CD8-positive, alpha-beta T cell (primary cell): ENCODE measurements at regions of chr11 and their contacts with region 1.

Region 1: DNA sequence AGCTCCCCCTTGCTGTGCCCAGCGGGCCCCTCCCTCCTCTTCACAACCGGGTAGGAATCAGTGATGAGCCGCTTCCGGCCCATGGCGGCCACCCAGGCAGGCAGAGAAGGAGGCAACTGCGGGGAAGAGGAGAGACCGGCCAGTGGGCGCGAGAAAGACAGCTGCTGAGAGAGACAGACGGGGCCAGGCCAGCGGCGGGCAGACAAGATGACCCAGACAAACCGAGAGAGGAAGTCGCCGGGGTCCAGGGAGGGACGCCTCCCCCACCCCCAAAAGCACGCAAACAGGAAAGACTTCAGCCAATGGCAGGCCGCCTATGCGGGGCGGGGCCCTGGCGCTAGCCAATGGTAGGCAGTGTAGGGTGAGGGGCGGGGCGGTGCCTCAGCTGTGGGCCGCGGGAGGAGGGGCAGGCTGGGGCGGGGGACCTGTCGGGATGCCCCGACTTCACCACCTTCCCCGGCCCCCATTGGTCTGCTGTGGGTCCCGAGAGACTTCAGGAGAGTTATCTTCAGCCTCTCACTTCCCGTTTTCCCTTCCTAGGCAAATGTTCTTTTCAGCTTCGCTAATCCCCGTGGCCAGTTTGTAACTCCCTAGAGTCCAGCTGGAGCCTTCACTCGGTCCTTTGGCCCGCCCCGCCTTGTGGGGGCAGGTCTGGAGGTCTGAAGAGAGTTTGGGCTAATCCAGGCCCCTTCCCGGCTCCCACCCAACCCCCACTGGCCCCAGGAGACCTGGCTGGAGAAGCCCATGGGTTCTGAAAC is at the start of gene POLD4:
- DNase-seq: peak; percentile 87 to 98 (median 95)
- ATAC-seq: peak; percentile 87
- H3K4me3 ChIP-seq: peak within 1 kb of the TSS; percentile 83 to 88
- H3K4me3 Mint-ChIP-seq: peak within 1 kb of the TSS; percentile 99
- H3K27ac ChIP-seq: peak within 1 kb of the TSS; percentile 94 to 99
- H3K27ac Mint-ChIP-seq: peak within 1 kb of the TSS; percentile 100
- H3K4me1 ChIP-seq: peaks cover 45% of the 10 kb centered on the region
- H3K4me1 Mint-ChIP-seq: peaks cover 59% of the 10 kb centered on the region
- H3K27me3 ChIP-seq: no peaks in the 10 kb centered on the region
- H3K27me3 Mint-ChIP-seq: no peaks in the 10 kb centered on the region
- CTCF ChIP-seq: no peak
- total RNA-seq, gene POLD4: 32.4 to 41.9 TPM

Region 2: GRCh38 chr11:67265633-67266423 is 87.7 kb before region 1 on chr11:
- CTCF ChIA-PET with region 1: interaction called, 25 read pairs
- POLR2A ChIA-PET with region 1: interaction called, 3 read pairs
- intact Hi-C with region 1: no loop called
- DNase-seq: peak; percentile 56 to 91 (median 79)
- ATAC-seq: peak; percentile 35
- H3K4me3 ChIP-seq: no peak overlapping the region
- H3K4me3 Mint-ChIP-seq: peak overlapping the region; percentile 81
- H3K27ac ChIP-seq: peak overlapping the region in 1 of 2 experiments; percentile 51
- H3K27ac Mint-ChIP-seq: peak overlapping the region; percentile 86
- H3K4me1 ChIP-seq: peaks cover 61% of the 10 kb centered on the region
- H3K4me1 Mint-ChIP-seq: peaks cover 69% of the 10 kb centered on the region
- H3K27me3 ChIP-seq: peaks cover 0 to 4% of the 10 kb centered on the region in 2 experiments
- H3K27me3 Mint-ChIP-seq: no peaks in the 10 kb centered on the region
- CTCF ChIP-seq: peak; percentile 67

Region 3: GRCh38 chr11:67373925-67374618 is 20.6 kb after region 1 on chr11:
- CTCF ChIA-PET with region 1: interaction called, 1,319 read pairs
- POLR2A ChIA-PET with region 1: interaction called, 35 read pairs
- intact Hi-C with region 1: loop called (anchors 1 kb)
- DNase-seq: peak in 7 of 9 experiments; percentile 41 to 75 (median 59)
- ATAC-seq: peak; percentile 27
- H3K4me3 ChIP-seq: peak overlapping the region; percentile 43 to 61
- H3K4me3 Mint-ChIP-seq: peak overlapping the region; percentile 79
- H3K27ac ChIP-seq: peak overlapping the region in 1 of 2 experiments; percentile 21
- H3K27ac Mint-ChIP-seq: no peak overlapping the region
- H3K4me1 ChIP-seq: peaks cover 47% of the 10 kb centered on the region
- H3K4me1 Mint-ChIP-seq: peaks cover 48% of the 10 kb centered on the region
- H3K27me3 ChIP-seq: no peaks in the 10 kb centered on the region
- H3K27me3 Mint-ChIP-seq: peaks cover 8% of the 10 kb centered on the region
- CTCF ChIP-seq: peak; percentile 47

Region 4: GRCh38 chr11:67401495-67402191 is 48.1 kb after region 1 on chr11 and contains the start of gene PPP1CA:
- CTCF ChIA-PET with region 1: interaction called, 1,319 read pairs
- POLR2A ChIA-PET with region 1: interaction called, 18 read pairs
- intact Hi-C with region 1: loop called in 1 of 2 experiments (anchors 1 kb)
- DNase-seq: peak; percentile 86 to 98 (median 92)
- ATAC-seq: peak; percentile 78
- H3K4me3 ChIP-seq: peak within 1 kb of the TSS; percentile 88 to 98
- H3K4me3 Mint-ChIP-seq: peak within 1 kb of the TSS; percentile 95
- H3K27ac ChIP-seq: peak within 1 kb of the TSS; percentile 75 to 79
- H3K27ac Mint-ChIP-seq: peak within 1 kb of the TSS; percentile 85
- H3K4me1 ChIP-seq: peaks cover 75% of the 10 kb centered on the region
- H3K4me1 Mint-ChIP-seq: peaks cover 65% of the 10 kb centered on the region
- H3K27me3 ChIP-seq: no peaks in the 10 kb centered on the region
- H3K27me3 Mint-ChIP-seq: no peaks in the 10 kb centered on the region
- CTCF ChIP-seq: peak; percentile 52
- total RNA-seq, gene PPP1CA: 40.5 to 42.2 TPM

Region 5: GRCh38 chr11:67468835-67469811 is 115.6 kb after region 1 on chr11 and contains the start of gene TMEM134:
- CTCF ChIA-PET with region 1: interaction called, 4 read pairs
- POLR2A ChIA-PET with region 1: interaction called, 4 read pairs
- intact Hi-C with region 1: loop called in 1 of 2 experiments (anchors 1 kb)
- DNase-seq: peak; percentile 86 to 97 (median 91)
- ATAC-seq: peak; percentile 81
- H3K4me3 ChIP-seq: peak within 1 kb of the TSS; percentile 80 to 89
- H3K4me3 Mint-ChIP-seq: peak within 1 kb of the TSS; percentile 89
- H3K27ac ChIP-seq: peak within 1 kb of the TSS; percentile 78 to 82
- H3K27ac Mint-ChIP-seq: peak within 1 kb of the TSS; percentile 93
- H3K4me1 ChIP-seq: peaks cover 39% of the 10 kb centered on the region
- H3K4me1 Mint-ChIP-seq: peaks cover 37% of the 10 kb centered on the region
- H3K27me3 ChIP-seq: no peaks in the 10 kb centered on the region
- H3K27me3 Mint-ChIP-seq: no peaks in the 10 kb centered on the region
- CTCF ChIP-seq: peak; percentile 43
- total RNA-seq, gene TMEM134: 41.2 to 48.5 TPM

Region 6: DNA sequence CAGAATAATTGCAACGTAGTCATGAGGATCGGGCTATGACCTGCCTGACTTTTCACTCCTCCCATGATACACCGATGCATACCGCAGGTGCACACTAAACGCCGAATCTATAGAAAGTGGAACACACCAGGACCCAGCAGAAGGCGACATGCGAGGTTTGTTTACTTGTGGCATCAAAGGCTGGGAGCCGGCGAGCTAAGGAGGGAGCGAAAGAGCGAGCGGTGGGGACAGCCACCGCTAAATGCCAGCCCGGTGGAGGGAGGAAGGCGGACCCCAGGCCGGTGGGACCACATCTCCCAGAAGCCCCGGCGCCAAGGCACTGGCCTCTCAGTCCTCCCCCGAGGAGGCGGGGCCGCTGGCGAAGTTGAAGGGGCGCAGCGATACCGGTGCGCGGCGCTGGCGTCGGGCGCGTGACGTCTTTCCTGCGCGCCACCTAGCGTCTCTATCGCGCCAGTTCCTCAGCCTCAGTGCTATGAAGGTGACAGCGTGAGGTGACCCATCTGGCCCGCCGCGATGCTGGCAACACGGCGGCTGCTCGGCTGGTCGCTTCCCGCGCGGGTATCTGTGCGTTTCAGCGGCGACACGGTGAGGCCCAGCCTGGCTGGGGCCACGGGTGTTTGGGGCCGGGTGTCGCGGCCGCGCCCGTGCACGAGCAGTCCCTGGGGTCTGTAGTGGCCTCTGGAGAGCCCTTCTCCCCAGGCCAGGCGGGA is 253.2 kb after region 1 on chr11 and contains the start of gene NDUFV1:
- CTCF ChIA-PET with region 1: interaction called, 3 read pairs
- POLR2A ChIA-PET with region 1: no interaction called
- intact Hi-C with region 1: loop called in 1 of 2 experiments (anchors 5 kb)
- DNase-seq: peak; percentile 92 to 98 (median 96)
- ATAC-seq: peak; percentile 99
- H3K4me3 ChIP-seq: peak within 1 kb of the TSS; percentile 69
- H3K4me3 Mint-ChIP-seq: peak within 1 kb of the TSS; percentile 91
- H3K27ac ChIP-seq: peak within 1 kb of the TSS; percentile 69 to 71
- H3K27ac Mint-ChIP-seq: peak within 1 kb of the TSS; percentile 89
- H3K4me1 ChIP-seq: peaks cover 21% of the 10 kb centered on the region
- H3K4me1 Mint-ChIP-seq: peaks cover 20% of the 10 kb centered on the region
- H3K27me3 ChIP-seq: no peaks in the 10 kb centered on the region
- H3K27me3 Mint-ChIP-seq: peaks cover 8% of the 10 kb centered on the region
- CTCF ChIP-seq: peak; percentile 59
- total RNA-seq, gene NDUFV1: 220 to 237 TPM

Region 7: DNA sequence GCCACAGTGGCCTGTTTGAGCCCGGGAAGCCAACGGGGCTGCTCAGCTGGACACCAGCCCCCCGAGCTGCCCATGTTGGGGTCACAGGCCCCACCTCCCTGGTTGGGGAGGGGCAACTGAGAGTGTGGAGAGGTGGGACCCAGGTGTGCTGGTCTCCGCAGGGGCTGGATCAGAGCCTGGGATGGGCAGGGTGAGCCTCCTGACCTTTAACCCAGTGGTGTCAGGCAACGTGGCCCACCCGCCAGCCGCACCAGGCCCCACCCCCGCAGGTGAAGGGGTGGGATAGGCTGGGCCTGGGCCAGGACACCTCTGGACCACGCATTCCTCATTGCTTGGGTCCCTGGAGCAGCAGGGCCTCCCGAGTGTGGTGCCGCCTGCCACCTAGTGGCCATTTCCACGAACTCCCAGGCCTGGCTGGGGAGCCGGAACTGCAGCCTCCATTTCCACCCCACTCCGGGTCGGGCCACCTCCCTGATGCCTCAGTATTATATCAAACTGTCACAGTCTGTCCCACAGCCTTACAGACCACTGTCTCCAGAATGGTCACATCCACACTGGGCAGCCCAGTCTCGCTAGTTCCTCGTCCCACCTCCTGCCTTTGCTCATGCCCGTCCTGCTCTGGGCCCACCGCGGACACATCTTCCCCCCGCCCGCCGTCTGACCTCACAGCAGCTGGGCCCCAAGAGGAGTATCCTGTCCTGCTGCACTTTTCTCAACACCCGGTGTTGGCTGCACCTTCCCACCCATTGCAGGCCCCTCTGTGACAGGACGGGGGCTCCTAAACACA is 1093.7 kb after region 1 on chr11:
- CTCF ChIA-PET with region 1: no interaction called
- POLR2A ChIA-PET with region 1: no interaction called
- intact Hi-C with region 1: no loop called
- DNase-seq: peak; percentile 57 to 85 (median 76)
- ATAC-seq: peak; percentile 99
- H3K4me3 ChIP-seq: no peak overlapping the region
- H3K4me3 Mint-ChIP-seq: peak overlapping the region; percentile 26
- H3K27ac ChIP-seq: no peak overlapping the region
- H3K27ac Mint-ChIP-seq: no peak overlapping the region
- H3K4me1 ChIP-seq: peaks cover 7% of the 10 kb centered on the region
- H3K4me1 Mint-ChIP-seq: peaks cover 4% of the 10 kb centered on the region
- H3K27me3 ChIP-seq: no peaks in the 10 kb centered on the region
- H3K27me3 Mint-ChIP-seq: no peaks in the 10 kb centered on the region
- CTCF ChIP-seq: peak; percentile 84

Region 8: GRCh38 chr11:69010964-69011623 is 1657.6 kb after region 1 on chr11:
- CTCF ChIA-PET with region 1: no interaction called
- POLR2A ChIA-PET with region 1: no interaction called
- intact Hi-C with region 1: no loop called
- DNase-seq: peak in 4 of 9 experiments; percentile 5 to 25 (median 18)
- ATAC-seq: peak; percentile 46
- H3K4me3 ChIP-seq: no peak overlapping the region
- H3K4me3 Mint-ChIP-seq: no peak overlapping the region
- H3K27ac ChIP-seq: no peak overlapping the region
- H3K27ac Mint-ChIP-seq: no peak overlapping the region
- H3K4me1 ChIP-seq: peaks cover 4% of the 10 kb centered on the region
- H3K4me1 Mint-ChIP-seq: peaks cover 6% of the 10 kb centered on the region
- H3K27me3 ChIP-seq: peaks cover 11 to 12% of the 10 kb centered on the region in 2 experiments
- H3K27me3 Mint-ChIP-seq: peaks cover 28% of the 10 kb centered on the region
- CTCF ChIP-seq: no peak